ENCODE measurements at regions of chr9 and their contacts with region 1.

Region 1: DNA sequence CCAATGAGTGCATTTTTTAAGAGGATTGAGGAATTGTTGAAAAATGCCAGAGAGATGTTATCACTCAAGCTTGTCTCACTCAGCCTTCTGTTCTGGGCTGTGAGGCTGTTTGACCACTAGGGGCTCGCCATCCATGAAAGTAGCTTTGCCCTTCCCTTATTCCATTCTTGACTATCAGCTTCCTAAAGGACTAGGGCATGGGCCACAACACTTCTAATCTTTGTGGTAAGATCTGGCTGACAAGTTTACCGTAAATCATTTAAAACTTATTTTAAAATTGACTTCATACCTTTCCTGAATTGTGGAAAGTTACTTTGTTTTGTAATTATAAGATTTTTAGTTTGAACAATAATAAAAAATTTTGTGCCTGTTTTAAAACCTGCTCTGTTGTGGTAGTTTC is 49.5 kb downstream of the TJP2 start:
- DNase-seq: peak; percentile 50
- H3K4me3 ChIP-seq: no peak overlapping the region
- H3K27ac ChIP-seq: no peak overlapping the region
- H3K27me3 ChIP-seq: no peaks in the 10 kb centered on the region
- CTCF ChIP-seq: peak; percentile 87

Region 2: GRCh38 chr9:69035438-69036308 is 187.9 kb before region 1 on chr9 and contains the start of gene FXN:
- CTCF ChIA-PET with region 1: interaction called, 19 read pairs
- POLR2A ChIA-PET with region 1: interaction called, 3 read pairs
- DNase-seq: peak; percentile 37
- H3K4me3 ChIP-seq: peak within 1 kb of the TSS; percentile 96
- H3K27ac ChIP-seq: peak within 1 kb of the TSS; percentile 31
- H3K27me3 ChIP-seq: no peaks in the 10 kb centered on the region
- CTCF ChIP-seq: peak; percentile 97
- polyA plus RNA-seq, gene FXN: 16.1 and 18.0 TPM in 2 replicates

Region 3: DNA sequence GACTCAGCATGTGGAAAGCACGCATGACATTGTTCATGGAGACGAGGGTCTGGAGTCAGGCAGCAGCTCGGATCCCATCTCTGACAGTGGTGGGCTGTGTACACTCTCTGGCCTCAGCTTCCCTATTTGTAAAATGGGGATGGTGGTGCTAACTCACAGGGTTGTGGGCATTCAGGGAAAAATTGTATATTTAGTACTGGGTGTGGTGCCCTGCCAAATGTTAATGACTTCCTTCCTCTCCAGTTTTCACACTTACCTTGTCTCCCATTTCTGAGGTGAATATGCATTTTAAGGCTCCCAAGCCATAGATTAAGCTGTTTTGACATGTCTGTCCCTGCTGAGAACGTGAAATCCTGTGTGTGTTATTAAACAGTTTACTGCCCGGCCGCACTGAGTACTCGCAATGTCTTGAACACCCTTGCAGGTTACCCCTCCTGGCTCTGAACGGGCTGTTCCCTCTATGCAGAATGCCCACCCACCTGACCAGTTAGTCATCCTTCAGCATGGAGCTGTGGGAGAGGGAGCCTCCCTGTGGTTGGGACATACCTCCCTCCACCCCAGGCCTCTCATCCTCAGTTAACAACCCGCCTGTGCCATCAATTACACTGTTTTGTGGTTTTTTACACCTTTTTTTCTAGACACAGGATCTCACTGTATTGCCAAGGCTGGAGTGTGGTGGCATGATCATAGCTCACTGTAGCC is 23.7 kb before region 1 on chr9:
- CTCF ChIA-PET with region 1: interaction called, 14 read pairs
- POLR2A ChIA-PET with region 1: no interaction called
- DNase-seq: no peak
- H3K4me3 ChIP-seq: no peak overlapping the region
- H3K27ac ChIP-seq: no peak overlapping the region
- H3K27me3 ChIP-seq: no peaks in the 10 kb centered on the region
- CTCF ChIP-seq: no peak

Region 4: DNA sequence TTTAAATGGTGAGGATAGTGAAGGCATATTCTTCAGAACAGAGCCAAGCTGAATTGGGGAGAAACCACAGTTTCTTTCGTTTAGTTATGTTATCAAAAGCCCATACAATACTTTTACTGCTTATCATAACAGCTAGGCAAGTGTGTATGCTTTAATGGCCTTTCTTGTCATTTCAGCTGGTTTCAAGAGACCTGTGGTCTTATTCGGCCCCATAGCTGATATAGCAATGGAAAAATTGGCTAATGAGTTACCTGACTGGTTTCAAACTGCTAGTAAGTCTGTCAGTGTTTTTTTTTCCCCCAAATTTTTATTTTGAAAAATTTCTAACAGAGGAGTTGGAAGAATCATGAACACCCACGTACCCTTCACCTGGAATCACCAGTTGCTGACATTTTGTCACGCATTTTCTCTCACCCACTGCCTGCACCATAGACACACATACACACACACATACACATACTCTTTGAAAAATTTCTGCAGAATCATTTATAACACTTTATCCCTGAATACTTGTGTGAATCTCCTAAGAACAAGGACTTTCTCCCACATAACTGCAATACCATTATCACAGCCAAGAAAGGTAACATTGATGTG is 14.2 kb after region 1 on chr9:
- CTCF ChIA-PET with region 1: interaction called, 19 read pairs
- POLR2A ChIA-PET with region 1: no interaction called
- DNase-seq: no peak
- H3K4me3 ChIP-seq: no peak overlapping the region
- H3K27ac ChIP-seq: no peak overlapping the region
- H3K27me3 ChIP-seq: no peaks in the 10 kb centered on the region
- CTCF ChIP-seq: no peak

Region 5: DNA sequence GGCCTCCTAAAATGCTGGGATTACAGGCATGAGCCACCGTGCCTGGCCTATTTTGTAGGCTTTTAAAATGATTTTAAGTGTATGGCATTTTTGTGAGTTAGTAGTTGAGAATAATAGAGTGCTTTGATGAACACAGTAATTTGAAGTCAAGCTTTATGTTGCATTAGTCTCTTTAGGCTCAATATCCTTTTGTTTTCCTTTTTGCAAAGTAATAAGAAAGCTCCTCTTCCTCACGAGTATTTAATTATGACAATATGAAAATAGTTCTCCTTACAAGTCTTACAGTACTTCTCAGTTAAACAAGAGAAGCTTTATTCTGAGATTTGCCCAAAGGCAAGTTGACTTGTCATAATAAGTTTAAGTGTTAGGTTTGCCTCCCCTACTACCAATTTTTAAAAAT is 19.5 kb after region 1 on chr9:
- CTCF ChIA-PET with region 1: interaction called, 24 read pairs
- POLR2A ChIA-PET with region 1: no interaction called
- DNase-seq: no peak
- H3K4me3 ChIP-seq: no peak overlapping the region
- H3K27ac ChIP-seq: no peak overlapping the region
- H3K27me3 ChIP-seq: no peaks in the 10 kb centered on the region
- CTCF ChIP-seq: no peak

Region 6: DNA sequence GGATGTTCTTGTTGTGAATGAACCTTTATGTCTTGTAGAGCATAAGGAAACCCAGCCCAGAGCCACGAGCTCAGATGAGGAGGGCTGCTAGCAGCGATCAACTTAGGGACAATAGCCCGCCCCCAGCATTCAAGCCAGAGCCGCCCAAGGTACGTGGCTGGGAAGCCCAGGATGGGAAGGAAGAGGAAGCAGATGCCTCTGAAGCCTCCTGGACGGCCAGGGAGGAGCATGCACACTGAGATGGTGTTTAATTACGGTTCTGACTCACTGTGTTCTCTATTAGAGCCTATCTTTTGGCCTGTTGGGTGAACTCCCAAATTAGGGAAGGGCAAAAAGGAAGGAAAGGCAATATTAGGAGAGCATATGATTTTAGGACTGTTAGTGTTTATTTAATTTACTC is 25.7 kb after region 1 on chr9:
- CTCF ChIA-PET with region 1: interaction called, 24 read pairs
- POLR2A ChIA-PET with region 1: no interaction called
- DNase-seq: no peak
- H3K4me3 ChIP-seq: no peak overlapping the region
- H3K27ac ChIP-seq: no peak overlapping the region
- H3K27me3 ChIP-seq: no peaks in the 10 kb centered on the region
- CTCF ChIP-seq: no peak

Measured in AG04450 (cell line).